ENCODE measurements at regions of chr10 and their contacts with region 1.

Region 1: DNA sequence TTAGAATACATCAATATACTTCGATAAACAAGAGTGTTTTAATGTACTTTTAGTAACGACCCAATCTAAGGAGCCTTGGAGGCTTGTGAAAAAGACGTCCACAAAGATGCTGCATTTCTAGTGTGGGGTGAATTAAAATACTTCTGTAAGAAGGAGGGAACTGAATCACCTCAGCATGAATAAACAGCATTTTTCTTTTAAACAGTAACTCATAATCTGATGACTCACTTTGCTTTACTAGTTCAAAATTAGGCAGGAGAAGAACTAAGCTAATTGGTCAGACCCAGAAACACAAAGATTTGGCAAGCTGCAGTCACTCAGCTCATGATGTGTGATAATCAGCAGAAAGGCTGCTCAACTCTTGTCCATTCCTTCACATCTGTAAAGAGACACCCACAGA is 24.2 kb downstream of the NCOA4 start:
- DNase-seq: no peak
- H3K4me3 ChIP-seq: no peak overlapping the region
- CTCF ChIP-seq: no peak

Region 2: DNA sequence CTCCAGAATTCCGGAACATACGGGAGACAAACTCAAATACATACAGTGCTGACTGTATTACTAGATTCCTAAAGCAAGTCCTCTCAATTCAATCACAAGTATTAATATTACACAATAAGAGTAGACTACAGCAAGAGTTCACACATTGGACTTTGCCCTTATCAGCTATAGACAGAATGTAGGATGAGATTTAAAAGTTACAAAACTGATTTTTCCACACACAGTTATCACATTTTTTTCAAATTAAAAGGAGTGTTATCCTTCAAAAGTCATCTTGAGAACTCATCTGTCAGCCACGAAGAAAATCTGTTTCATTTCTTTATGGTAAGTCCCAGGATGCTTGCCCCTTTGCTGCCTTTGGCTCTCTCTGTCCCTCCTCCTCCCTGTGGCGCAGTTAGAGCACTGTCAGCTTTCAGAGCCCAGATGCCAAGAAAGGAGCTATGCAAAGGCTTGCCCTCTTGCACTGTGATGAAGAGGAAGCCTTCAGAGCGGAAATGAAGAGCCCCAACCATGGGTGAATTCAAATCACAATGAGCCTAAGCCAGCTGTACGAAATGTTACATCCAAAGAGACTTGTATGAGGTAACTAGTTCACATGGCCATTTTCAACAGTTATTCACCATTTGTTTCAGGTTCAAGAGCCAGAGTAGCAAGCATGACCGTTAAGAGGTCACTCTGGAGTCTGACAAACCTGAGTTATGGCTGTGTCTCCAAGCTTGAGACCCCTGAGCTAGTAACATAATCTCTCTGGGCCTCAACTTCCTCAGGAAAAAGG is 13.5 kb after region 1 on chr10:
- CTCF ChIA-PET with region 1: interaction called, 15 read pairs
- POLR2A ChIA-PET with region 1: no interaction called
- DNase-seq: no peak
- H3K4me3 ChIP-seq: no peak overlapping the region
- CTCF ChIP-seq: no peak

Region 3: DNA sequence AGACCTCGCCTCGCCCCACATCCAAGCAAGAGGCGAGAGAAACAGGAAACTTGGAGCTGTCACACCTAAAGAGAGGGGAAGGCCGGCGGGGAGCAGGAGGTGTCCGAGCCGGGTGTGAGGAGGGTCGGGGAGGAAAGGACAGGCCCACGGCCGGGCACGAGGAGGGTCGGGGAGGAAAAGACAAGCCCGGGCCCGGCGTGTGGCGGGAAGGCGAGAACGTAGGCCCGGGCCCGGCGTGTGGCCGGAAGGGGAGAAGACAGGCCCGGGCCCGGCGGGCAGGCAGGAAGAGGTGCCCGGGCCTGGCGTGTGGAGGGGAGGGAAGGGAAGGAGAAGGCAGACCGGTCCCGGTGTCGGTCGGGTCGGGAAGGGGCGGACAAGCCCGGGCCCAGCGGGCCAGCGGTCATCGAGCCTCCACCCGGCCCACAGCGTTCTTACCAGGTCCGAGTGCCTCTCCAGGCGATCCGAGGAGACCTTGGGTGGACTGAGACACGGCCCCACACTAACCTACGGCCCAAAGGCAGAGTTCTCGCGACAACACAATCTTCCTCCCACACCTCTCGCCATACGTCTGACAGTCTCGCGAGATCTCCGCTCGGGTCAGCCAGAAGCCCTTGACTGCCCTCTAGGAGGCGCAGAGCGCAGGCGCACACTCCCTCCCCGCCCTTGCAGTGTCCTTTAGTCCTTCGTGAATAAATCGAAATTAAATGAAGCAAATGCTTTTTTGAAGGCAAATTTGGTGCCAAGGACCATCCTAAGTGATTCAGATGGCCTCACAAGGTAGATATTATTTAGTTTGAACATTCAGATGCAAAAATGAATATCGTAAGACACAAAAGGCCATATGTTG is 24.1 kb after region 1 on chr10 and contains the start of gene NCOA4:
- CTCF ChIA-PET with region 1: interaction called, 37 read pairs
- POLR2A ChIA-PET with region 1: no interaction called
- DNase-seq: peak; percentile 86
- H3K4me3 ChIP-seq: peak within 1 kb of the TSS; percentile 94
- CTCF ChIP-seq: peak; percentile 84

Region 4: DNA sequence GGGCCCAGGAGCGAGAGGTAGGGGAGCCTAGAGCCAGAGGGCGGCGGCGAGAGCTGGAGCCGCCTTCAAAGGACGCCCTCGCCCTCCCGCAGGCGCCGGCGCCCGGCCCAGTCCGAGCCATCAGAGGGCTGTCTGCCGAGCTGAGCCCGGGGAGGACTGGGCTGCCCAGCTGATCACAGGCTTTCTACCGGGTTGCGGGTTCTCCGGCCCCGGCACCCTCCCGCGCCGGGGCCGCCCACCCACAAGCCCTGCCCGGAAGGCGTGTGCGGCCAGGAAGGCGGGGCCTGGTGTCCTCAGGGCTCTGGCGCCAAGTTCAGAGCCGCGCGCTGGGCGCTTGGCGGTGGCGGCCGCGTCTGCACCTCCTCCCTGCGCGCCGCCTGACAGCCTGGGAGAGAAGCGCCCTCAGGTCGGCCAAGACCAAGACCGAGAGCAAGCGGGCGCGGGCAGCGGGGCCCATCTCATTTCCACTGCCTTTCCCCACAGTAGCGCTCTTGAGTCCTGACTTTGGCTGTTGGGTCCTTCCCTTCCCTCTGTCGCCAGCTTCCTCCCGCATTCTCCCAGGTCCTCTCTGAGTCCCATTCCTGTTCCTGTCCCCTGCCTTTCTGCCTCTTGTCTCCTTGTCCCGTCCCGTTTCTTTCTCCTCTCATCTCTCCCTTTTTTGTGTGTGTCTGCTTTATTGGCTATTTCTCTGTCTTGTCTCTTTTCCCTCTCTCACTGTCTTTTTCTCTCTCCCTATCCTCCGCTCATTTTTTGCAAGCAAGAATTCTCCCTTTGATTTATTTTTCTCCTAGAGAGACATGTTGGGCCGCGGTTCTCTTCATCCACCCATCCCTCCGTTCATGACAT is 100.4 kb after region 1 on chr10:
- CTCF ChIA-PET with region 1: no interaction called
- POLR2A ChIA-PET with region 1: no interaction called
- DNase-seq: no peak
- H3K4me3 ChIP-seq: peak overlapping the region; percentile 56
- CTCF ChIP-seq: no peak